BJ (cell line): ENCODE measurements at regions of chr12 and their contacts with region 1.

Region 1: GRCh38 chr12:5442251-5443006 is 10.5 kb downstream of the NTF3 start:
- DNase-seq: no peak
- H3K4me3 ChIP-seq: no peak overlapping the region
- H3K27me3 ChIP-seq: no peaks in the 10 kb centered on the region
- CTCF ChIP-seq: peak; percentile 71

Region 2: GRCh38 chr12:5456906-5457305 is 14.5 kb after region 1 on chr12:
- CTCF ChIA-PET with region 1: interaction called, 12 read pairs
- POLR2A ChIA-PET with region 1: no interaction called
- DNase-seq: peak; percentile 46
- H3K4me3 ChIP-seq: no peak overlapping the region
- H3K27me3 ChIP-seq: no peaks in the 10 kb centered on the region
- CTCF ChIP-seq: no peak